Activated T-helper 2 cell treated with anti-CD3 and anti-CD28 coated beads, Interferon-gamma antibody, Interleukin-2, Interleukin-4, amounts not matched to agents 10 μg/mL and 5 μg/mL and 100 μg/mL, durations not matched to agents 14 hours and 24 hours and 36 hours (primary cell): ENCODE measurements at regions of chr20 and their contacts with region 1.

Region 1: DNA sequence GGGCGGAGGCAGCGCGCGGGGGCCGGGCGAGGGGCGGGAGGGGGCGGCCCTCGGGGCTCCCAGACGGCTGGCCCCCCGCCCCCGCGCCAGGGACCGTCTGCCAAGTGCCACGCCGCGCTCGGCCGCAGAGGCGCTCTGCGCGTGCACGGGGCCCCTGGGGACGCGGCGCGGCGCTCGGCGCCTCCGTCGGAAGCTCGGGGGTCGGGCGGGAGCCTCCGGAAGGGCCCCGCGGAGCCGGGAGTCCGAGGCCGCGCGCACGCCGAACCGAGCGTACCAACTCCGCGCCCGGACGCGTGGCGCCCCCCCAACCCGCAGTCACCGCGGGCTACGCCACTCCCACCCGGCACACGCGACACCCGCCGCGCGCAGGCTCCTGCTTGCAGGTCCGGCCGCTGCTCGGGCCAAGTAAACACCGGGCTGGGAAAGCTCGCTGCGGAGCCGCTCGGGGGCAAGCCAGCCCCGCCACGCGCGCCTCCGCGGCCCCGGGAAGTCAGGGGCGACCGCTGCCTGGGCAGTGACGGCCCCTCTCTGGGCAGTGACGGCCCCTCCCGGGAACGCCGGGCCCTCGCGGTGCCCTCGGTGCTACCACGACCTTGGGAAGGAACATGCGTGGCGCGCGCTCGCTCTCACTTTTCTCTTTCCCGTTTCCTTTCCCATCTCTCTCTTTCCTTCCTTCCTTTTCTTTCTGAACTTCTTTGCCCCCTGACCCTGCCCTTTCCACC is 384 bp upstream of the PREX1 start:
- DNase-seq: peak; percentile 77
- H3K4me3 Mint-ChIP-seq: peak overlapping the region; percentile 80
- H3K27ac Mint-ChIP-seq: peak overlapping the region; percentile 53
- H3K4me1 Mint-ChIP-seq: peaks cover 39% of the 10 kb centered on the region
- H3K27me3 Mint-ChIP-seq: peaks cover 35% of the 10 kb centered on the region

Region 2: GRCh38 chr20:48718857-48719578 is 109.2 kb before region 1 on chr20:
- intact Hi-C with region 1: loop called (anchors 5 kb)
- DNase-seq: no peak
- H3K4me3 Mint-ChIP-seq: peak overlapping the region; percentile 64
- H3K27ac Mint-ChIP-seq: peak overlapping the region; percentile 85
- H3K4me1 Mint-ChIP-seq: peaks cover 66% of the 10 kb centered on the region
- H3K27me3 Mint-ChIP-seq: no peaks in the 10 kb centered on the region

Region 3: DNA sequence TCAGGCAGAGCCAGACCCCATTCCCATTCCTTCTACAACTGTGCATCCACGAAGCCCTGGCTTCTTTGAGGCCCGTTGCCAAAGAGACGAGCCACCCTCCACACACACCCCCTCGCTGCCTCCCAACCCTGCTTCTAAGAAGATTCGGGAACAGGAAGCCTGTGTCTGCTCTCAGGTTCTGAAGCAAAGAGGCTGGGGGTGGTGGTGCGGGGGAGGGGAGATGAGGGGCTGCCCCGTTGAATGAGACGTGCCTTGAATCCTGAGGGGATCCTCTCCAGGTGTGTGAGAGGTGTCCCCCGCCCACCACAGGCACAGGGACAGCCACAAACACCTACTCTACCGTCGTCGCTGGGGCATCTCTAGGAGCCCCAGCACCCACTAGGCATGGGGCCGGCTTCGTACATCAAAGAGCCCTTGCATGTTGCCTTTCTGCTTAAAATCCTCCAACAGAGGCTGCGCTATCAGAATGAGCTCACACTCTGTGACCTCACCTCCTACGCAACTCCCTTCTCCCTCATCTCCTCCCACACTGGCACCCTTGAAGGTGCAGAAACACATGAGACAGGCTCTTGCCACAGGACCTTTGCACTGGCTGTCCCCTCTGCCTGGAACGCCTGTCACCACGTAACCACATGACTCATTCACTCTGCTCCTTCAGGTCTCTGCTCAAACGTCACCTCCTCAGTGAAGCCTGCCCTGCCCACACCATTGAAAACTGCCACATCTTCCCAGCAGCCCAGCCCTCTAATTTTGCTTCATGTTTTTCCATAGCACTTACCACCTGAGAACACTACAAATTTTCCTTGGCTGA is 58.9 kb before region 1 on chr20:
- intact Hi-C with region 1: loop called (anchors 1 kb)
- DNase-seq: peak; percentile 59
- H3K4me3 Mint-ChIP-seq: peak overlapping the region; percentile 43
- H3K27ac Mint-ChIP-seq: peak overlapping the region; percentile 82
- H3K4me1 Mint-ChIP-seq: peaks cover 69% of the 10 kb centered on the region
- H3K27me3 Mint-ChIP-seq: no peaks in the 10 kb centered on the region

Region 4: DNA sequence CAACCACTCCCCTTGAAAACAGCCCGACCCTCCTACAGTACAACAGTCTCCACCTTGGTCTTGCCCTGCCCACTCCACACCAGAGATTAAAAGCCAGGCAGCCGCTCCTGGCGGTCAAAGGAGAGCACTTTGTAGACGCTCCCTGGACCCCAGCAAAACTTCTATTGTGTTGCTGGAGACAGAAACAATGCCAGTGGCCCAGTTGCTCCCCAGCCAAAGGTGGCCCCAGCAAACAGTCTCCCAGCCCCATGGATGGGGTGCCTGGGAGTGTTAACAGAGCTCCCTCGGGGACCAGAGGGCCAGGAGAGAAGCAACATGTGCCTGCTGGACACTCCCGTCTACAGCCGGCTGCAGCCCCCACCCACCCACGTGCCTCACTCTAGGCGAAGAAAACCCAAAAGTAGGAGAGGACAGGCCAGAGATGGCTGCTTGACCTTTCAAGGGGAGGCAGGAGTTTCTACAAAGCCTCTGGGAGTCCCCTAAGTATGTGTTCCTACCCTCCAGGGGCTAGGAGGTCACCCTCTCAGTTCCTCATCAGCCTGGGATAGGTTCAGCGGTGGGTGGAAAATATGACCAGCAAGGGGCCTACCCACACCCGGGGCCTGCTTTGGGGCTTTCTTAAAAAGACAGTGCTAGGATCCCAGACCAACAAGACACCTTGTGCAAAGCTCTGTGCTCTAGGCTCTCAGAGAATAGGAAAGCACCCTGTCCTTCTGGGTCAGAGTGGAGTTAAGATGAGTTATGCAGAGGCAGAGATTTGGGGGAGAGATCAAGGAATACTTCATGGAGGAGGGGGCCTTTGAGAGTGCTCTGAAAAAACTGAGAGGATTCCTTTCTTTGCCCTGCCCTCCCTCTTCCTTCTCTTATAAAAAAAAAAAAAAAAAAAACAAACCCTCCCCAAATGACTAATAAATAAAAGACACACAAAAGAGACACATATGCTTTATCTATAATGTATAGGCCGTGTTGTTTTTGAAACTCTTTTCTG is 18.6 kb after region 1 on chr20:
- intact Hi-C with region 1: loop called (anchors 1 kb)
- DNase-seq: no peak
- H3K4me3 Mint-ChIP-seq: no peak overlapping the region
- H3K27ac Mint-ChIP-seq: peak overlapping the region; percentile 93
- H3K4me1 Mint-ChIP-seq: peaks cover 27% of the 10 kb centered on the region
- H3K27me3 Mint-ChIP-seq: peaks cover 14% of the 10 kb centered on the region

Region 5: DNA sequence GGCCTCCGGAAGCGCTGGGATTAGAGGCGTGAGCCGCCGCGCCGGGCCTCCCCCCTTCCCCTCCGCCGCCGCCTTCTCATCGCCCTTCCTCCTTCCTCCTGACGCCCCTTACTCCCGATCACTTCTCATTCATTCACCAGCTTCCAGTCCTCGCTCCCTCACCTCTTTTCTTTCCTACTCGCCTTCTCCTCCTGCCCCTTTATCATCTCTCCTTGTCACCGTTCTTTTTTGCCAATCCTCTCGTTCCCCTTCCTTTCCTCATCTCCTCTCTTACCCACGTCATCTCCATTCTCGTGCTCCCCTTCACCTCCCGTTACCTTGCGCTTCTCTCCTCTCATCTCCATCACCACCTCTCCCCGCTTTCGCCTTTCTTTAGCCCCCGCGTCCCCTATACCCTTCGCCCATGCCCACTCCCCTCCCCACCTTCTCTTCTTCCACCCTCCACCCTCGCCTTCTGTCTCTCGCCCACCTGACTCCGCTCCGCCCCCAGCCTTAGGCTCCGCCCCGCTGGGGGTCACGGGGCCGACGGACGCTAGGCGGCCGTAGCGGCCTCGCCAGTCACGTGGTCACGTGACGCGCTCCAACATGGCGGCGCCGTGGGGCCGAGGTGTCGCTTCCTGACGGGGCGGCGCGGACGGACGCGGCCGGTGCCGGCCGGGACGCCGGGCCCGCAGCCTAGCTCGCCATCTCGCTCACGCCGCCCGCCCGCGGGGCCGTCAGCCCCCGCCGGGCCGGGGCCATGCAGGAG is 93.1 kb after region 1 on chr20 and contains the start of gene ARFGEF2:
- intact Hi-C with region 1: loop called (anchors 5 kb)
- DNase-seq: peak; percentile 92
- H3K4me3 Mint-ChIP-seq: peak within 1 kb of the TSS; percentile 94
- H3K27ac Mint-ChIP-seq: peak within 1 kb of the TSS; percentile 96
- H3K4me1 Mint-ChIP-seq: peaks cover 31% of the 10 kb centered on the region
- H3K27me3 Mint-ChIP-seq: no peaks in the 10 kb centered on the region
- total RNA-seq, gene ARFGEF2: 31.8 and 32.6 TPM in 2 replicates

Region 6: GRCh38 chr20:49063279-49063678 is 235.1 kb after region 1 on chr20:
- intact Hi-C with region 1: no loop called
- DNase-seq: no peak
- H3K4me3 Mint-ChIP-seq: no peak overlapping the region
- H3K27ac Mint-ChIP-seq: no peak overlapping the region
- H3K4me1 Mint-ChIP-seq: no peaks in the 10 kb centered on the region
- H3K27me3 Mint-ChIP-seq: no peaks in the 10 kb centered on the region